Common myeloid progenitor, CD34-positive (primary cell): ENCODE measurements at regions of chr9 and their contacts with region 1.

Region 1: DNA sequence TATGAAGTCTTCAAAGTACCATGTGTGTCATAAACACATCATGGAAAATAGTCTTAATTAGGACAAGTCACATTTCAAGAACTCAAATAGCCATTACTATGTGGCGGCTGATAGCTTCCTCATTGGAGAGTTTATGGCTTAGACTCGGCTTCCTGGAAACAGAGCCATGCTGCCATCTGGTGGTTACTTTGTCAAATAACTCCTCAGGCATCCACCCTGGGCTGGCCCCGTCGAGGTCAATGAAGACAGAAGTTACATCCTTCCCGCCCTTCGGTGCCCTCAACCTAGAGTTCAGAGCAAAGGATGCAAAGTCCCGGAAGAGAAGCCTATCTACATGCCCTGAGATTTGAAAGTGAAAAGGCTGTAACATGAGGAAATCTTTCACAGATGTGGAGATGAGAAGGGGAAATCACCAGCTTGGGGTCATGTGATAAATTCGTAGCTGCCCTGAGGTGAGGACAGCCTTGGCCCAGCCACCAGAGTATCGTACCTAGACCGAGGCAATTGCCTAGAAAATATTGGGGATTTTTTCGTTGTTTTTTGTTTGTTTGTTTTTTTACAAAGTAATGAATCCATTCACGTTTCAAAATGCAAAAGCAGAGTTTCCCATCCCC is 45.5 kb upstream of the ZNF169 start:
- DNase-seq: peak; percentile 83 to 92 (median 87)
- H3K4me3 ChIP-seq: peak overlapping the region in 1 of 7 experiments; percentile 4
- H3K27ac ChIP-seq: no peak overlapping the region
- H3K4me1 ChIP-seq: peaks cover 0 to 3% (median 0%) of the 10 kb centered on the region in 4 experiments
- H3K27me3 ChIP-seq: no peaks in the 10 kb centered on the region

Region 2: GRCh38 chr9:94014065-94014654 is 199.5 kb before region 1 on chr9:
- CTCF ChIA-PET with region 1: interaction called, 49 read pairs
- POLR2A ChIA-PET with region 1: no interaction called
- DNase-seq: peak; percentile 14 to 40 (median 19)
- H3K4me3 ChIP-seq: no peak overlapping the region
- H3K27ac ChIP-seq: no peak overlapping the region
- H3K4me1 ChIP-seq: peaks cover 0 to 7% (median 4%) of the 10 kb centered on the region in 4 experiments
- H3K27me3 ChIP-seq: no peaks in the 10 kb centered on the region

Region 3: DNA sequence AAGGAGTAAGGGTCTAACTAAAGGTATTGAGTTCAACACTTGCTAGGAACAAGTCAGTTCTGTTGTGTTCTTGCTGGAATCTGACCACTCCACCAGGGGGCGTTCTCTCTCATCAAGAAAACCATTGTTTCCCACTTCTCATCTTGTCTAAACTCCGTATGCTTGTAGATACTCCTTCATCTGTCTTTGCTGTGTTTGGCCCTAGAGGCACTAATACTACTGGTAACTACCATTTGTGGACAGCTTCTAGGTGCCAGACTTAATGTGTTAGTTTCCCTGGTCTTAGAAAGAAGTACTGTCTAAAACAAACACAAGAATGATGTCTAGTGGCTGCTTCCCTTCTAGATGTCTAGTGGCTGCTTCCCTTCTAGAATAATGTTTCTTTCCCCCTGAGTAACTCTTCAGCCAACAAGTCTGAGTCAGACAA is 148.1 kb before region 1 on chr9:
- CTCF ChIA-PET with region 1: interaction called, 132 read pairs
- POLR2A ChIA-PET with region 1: no interaction called
- DNase-seq: peak; percentile 85 to 92 (median 88)
- H3K4me3 ChIP-seq: no peak overlapping the region
- H3K27ac ChIP-seq: no peak overlapping the region
- H3K4me1 ChIP-seq: peaks cover 0 to 7% (median 2%) of the 10 kb centered on the region in 4 experiments
- H3K27me3 ChIP-seq: no peaks in the 10 kb centered on the region

Region 4: DNA sequence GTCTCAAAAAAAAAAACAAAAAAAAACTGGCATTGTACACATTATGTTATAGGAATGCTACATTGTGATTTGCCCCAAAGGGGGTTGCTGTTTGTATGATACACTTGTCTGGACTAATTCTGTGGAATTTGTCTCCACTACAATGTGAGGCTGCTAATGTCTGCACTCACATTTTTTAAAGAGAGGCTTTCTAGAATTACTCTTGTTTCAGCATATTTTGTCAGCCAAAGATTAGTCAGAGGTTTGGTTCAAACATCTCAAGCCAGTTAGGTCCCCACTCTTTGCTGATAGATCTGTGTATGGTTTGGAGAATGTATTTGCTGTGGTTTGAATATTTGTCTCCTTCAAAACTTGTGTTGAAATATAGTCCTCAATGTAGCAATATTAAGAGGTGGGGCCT is 13.8 kb before region 1 on chr9:
- CTCF ChIA-PET with region 1: interaction called, 14 read pairs
- POLR2A ChIA-PET with region 1: no interaction called
- DNase-seq: no peak
- H3K4me3 ChIP-seq: no peak overlapping the region
- H3K27ac ChIP-seq: no peak overlapping the region
- H3K4me1 ChIP-seq: no peaks in the 10 kb centered on the region
- H3K27me3 ChIP-seq: no peaks in the 10 kb centered on the region